CD8-positive, alpha-beta T cell (primary cell): ENCODE measurements at regions of chr19 and their contacts with region 1.

Region 1: GRCh38 chr19:19170053-19170872 is at the start of gene MEF2B:
- DNase-seq: peak; percentile 43 to 84 (median 76)
- ATAC-seq: peak; percentile 98
- H3K4me3 ChIP-seq: peak within 1 kb of the TSS in 1 of 2 experiments; percentile 39
- H3K4me3 Mint-ChIP-seq: peak within 1 kb of the TSS; percentile 63
- H3K27ac ChIP-seq: no peak within 1 kb of the TSS
- H3K27ac Mint-ChIP-seq: no peak within 1 kb of the TSS
- H3K4me1 ChIP-seq: peaks cover 13% of the 10 kb centered on the region
- H3K4me1 Mint-ChIP-seq: peaks cover 16% of the 10 kb centered on the region
- H3K27me3 ChIP-seq: peaks cover 0 to 2% of the 10 kb centered on the region in 2 experiments
- H3K27me3 Mint-ChIP-seq: peaks cover 4% of the 10 kb centered on the region
- CTCF ChIP-seq: no peak
- total RNA-seq, gene MEF2B: 1.8 to 2.0 TPM

Region 2: DNA sequence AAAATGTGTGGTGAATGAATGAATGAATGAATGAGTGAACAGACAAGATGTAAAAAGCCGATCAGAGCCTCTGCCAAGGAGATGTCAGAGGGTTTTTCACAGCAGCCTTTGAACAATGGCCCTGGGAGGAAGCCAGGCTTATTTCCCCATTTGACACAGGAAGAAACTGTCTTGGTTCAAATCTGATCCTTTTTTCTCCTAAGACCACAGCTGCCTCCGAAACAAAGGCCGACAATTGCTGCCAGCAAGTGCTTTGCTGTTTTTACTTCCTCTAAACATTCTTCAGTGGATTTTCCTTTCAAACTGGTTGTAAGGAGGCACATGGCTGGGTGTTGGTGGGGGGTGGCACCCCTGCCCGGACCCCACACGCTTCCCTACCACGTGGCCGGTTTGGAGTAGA is 185.0 kb before region 1 on chr19:
- CTCF ChIA-PET with region 1: no interaction called
- POLR2A ChIA-PET with region 1: no interaction called
- intact Hi-C with region 1: no loop called
- DNase-seq: no peak
- ATAC-seq: no peak
- H3K4me3 ChIP-seq: no peak overlapping the region
- H3K4me3 Mint-ChIP-seq: no peak overlapping the region
- H3K27ac ChIP-seq: no peak overlapping the region
- H3K27ac Mint-ChIP-seq: no peak overlapping the region
- H3K4me1 ChIP-seq: no peaks in the 10 kb centered on the region
- H3K4me1 Mint-ChIP-seq: no peaks in the 10 kb centered on the region
- H3K27me3 ChIP-seq: no peaks in the 10 kb centered on the region
- H3K27me3 Mint-ChIP-seq: peaks cover 9% of the 10 kb centered on the region
- CTCF ChIP-seq: no peak

Region 3: GRCh38 chr19:19053508-19054314 is 116.6 kb before region 1 on chr19:
- CTCF ChIA-PET with region 1: interaction called, 15 read pairs
- POLR2A ChIA-PET with region 1: no interaction called
- intact Hi-C with region 1: loop called (anchors 1 kb)
- DNase-seq: peak; percentile 37 to 81 (median 68)
- ATAC-seq: peak; percentile 81
- H3K4me3 ChIP-seq: no peak overlapping the region
- H3K4me3 Mint-ChIP-seq: no peak overlapping the region
- H3K27ac ChIP-seq: no peak overlapping the region
- H3K27ac Mint-ChIP-seq: no peak overlapping the region
- H3K4me1 ChIP-seq: no peaks in the 10 kb centered on the region
- H3K4me1 Mint-ChIP-seq: no peaks in the 10 kb centered on the region
- H3K27me3 ChIP-seq: no peaks in the 10 kb centered on the region
- H3K27me3 Mint-ChIP-seq: no peaks in the 10 kb centered on the region
- CTCF ChIP-seq: peak; percentile 73

Region 4: GRCh38 chr19:19145684-19146608 is 24.3 kb before region 1 on chr19:
- CTCF ChIA-PET with region 1: interaction called, 27 read pairs
- POLR2A ChIA-PET with region 1: no interaction called
- intact Hi-C with region 1: loop called (anchors 1 kb)
- DNase-seq: peak; percentile 75 to 92 (median 82)
- ATAC-seq: peak; percentile 100
- H3K4me3 ChIP-seq: no peak overlapping the region
- H3K4me3 Mint-ChIP-seq: no peak overlapping the region
- H3K27ac ChIP-seq: no peak overlapping the region
- H3K27ac Mint-ChIP-seq: no peak overlapping the region
- H3K4me1 ChIP-seq: no peaks in the 10 kb centered on the region
- H3K4me1 Mint-ChIP-seq: no peaks in the 10 kb centered on the region
- H3K27me3 ChIP-seq: no peaks in the 10 kb centered on the region
- H3K27me3 Mint-ChIP-seq: no peaks in the 10 kb centered on the region
- CTCF ChIP-seq: peak; percentile 75

Region 5: DNA sequence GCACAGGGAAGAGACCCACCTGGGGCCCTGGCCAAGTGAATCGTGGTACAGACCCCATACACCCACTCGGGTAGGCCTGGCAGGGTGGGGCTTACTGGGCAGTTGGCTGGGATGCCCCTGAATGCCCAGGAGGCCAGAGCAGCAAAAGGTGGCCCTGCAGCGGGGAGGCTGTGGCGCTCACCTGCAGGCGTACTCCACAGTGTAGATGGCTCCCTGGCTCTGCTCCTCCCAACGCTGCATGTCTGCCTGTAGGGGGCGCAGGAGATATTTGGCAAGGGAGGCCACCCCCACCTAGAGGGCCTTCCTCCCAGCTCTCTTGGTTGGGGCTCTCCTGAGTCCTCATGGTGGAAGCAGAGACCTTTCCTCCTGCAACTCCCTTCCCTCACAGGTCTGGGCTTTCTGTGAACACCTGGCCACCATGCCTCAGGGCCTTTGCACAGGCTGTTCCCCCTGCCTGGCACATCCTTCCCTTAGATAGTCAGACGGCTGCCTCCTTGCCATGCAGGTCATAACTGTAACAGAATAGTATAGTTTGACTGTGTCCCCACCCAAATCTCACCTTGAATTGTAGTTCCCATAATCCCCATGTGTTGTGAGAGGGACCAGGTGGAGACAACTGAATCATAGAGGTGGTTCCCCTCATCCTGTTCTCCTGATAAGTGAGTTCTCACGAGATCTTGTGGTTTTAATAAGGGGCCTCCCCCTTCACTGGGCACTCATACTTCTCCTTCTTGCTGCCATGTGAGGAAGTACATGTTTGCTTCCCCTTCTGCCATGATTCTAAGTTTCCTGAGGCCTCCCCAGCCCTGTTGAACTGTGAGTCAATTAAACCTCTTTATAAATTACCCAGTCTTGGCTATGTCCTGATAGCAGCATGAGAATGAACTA is 15.8 kb after region 1 on chr19:
- CTCF ChIA-PET with region 1: interaction called, 19 read pairs
- POLR2A ChIA-PET with region 1: no interaction called
- intact Hi-C with region 1: no loop called
- DNase-seq: peak; percentile 16 to 78 (median 65)
- ATAC-seq: peak; percentile 96
- H3K4me3 ChIP-seq: no peak overlapping the region
- H3K4me3 Mint-ChIP-seq: no peak overlapping the region
- H3K27ac ChIP-seq: no peak overlapping the region
- H3K27ac Mint-ChIP-seq: peak overlapping the region; percentile 21
- H3K4me1 ChIP-seq: peaks cover 24% of the 10 kb centered on the region
- H3K4me1 Mint-ChIP-seq: peaks cover 32% of the 10 kb centered on the region
- H3K27me3 ChIP-seq: no peaks in the 10 kb centered on the region
- H3K27me3 Mint-ChIP-seq: no peaks in the 10 kb centered on the region
- CTCF ChIP-seq: peak; percentile 57

Region 6: GRCh38 chr19:19732579-19733501 is 562.6 kb after region 1 on chr19 and contains the start of gene ZNF14:
- CTCF ChIA-PET with region 1: no interaction called
- POLR2A ChIA-PET with region 1: no interaction called
- intact Hi-C with region 1: no loop called
- DNase-seq: peak; percentile 77 to 96 (median 92)
- ATAC-seq: peak; percentile 99
- H3K4me3 ChIP-seq: peak within 1 kb of the TSS; percentile 84 to 99
- H3K4me3 Mint-ChIP-seq: peak within 1 kb of the TSS; percentile 100
- H3K27ac ChIP-seq: peak within 1 kb of the TSS; percentile 79 to 82
- H3K27ac Mint-ChIP-seq: peak within 1 kb of the TSS; percentile 93
- H3K4me1 ChIP-seq: peaks cover 13% of the 10 kb centered on the region
- H3K4me1 Mint-ChIP-seq: peaks cover 29% of the 10 kb centered on the region
- H3K27me3 ChIP-seq: no peaks in the 10 kb centered on the region
- H3K27me3 Mint-ChIP-seq: no peaks in the 10 kb centered on the region
- CTCF ChIP-seq: no peak
- total RNA-seq, gene ZNF14: 40.7 to 44.9 TPM